Left cardiac atrium (tissue), 4 donors: ENCODE measurements at regions of chr12 and their contacts with region 1.

Region 1: DNA sequence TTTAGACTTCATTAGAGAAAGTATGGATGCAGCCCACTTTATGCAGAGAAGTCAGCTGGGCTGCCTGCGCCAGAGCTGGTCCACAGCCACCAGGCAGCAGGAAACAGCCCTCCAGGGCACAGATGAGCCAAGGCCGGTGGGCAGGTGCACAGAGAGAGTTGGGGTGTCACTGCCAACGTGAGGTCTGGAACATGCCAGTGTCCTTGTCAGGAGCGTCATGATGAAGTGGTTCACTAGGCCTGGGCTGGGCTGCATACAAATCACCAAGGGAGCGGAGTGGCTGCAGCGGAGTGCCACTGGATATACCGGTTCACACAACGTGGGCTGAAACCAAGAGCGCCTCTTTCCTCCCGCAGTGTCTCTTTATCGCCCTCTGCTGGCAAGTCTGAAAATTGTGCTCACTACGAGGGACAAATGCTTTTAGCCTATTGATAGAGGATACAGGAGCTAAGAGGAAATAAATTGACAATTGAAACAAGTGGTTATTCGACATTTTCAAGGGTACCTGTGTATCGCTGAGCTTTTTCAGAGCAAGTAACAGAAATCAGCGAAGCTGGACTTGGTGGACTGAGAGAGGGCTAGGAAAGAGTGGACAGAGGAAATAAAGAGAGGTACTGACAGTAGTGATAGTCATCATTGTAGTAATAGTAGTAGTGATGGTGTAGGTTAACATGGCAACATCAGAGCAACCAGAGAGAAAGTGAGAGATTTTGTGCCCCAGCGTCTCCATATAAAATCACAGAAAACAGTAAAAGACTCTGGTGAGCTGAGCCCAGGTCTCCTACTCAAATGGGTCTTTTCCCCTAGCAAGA is 52.0 kb upstream of the ITPR2 start:
- DNase-seq: peak; percentile 82
- ATAC-seq: peak; percentile 90 to 93

Region 2: DNA sequence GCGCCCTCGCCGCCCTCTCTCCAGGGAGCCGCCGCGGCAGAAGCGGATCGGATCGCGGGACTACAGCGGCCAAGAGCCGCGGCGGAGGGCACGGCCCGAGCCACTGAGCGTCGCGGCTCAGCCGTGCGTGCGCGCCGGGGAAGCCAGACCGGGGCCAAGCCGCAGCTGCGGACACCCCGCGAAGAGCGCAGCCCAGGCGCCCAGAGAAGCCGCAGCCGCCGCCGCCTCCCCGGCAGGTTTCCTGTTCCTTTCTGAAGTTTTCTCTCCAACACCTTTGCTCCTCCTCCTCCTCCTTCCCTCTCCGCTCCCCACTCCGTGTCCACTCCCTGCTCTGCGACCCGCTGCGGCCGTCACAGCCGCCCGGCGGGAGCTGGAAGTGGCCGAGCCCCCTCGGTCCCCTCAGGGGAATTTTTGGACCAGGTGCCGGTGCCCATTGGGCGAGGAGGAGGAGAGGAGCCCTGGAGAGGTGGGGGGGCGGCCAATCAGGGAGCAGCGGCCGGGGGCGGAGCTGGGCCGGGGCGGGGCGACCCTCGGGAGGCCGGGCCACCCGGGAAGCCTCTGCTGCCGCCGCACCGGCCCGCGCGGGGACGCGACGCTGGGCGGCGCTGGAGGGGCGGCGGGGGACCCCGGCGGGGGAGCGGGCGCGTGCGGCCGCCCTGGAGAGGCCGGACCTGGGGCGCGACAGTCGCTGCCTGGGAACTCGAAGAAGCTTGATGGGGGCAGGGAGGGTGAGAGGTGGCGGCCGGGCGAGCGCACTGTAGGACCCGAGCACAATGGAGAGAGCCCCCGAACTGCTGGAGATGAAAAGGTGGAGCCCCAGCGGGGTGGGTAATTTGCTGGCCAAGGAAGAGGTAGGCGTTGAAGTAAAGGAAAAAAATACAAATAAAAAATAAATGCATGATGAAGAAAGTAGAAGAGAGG is 51.9 kb before region 1 on chr12 and contains the start of gene ITPR2:
- intact Hi-C with region 1: loop called in 1 of 2 experiments (anchors 10 kb)
- DNase-seq: peak; percentile 96
- ATAC-seq: peak; percentile 97
- total RNA-seq, gene ITPR2: 25.4 to 26.7 TPM

Region 3: GRCh38 chr12:26853303-26854030 is 31.5 kb before region 1 on chr12:
- intact Hi-C with region 1: loop called in 1 of 2 experiments (anchors 2 kb)
- DNase-seq: peak; percentile 65
- ATAC-seq: peak; percentile 83 to 88

Region 4: DNA sequence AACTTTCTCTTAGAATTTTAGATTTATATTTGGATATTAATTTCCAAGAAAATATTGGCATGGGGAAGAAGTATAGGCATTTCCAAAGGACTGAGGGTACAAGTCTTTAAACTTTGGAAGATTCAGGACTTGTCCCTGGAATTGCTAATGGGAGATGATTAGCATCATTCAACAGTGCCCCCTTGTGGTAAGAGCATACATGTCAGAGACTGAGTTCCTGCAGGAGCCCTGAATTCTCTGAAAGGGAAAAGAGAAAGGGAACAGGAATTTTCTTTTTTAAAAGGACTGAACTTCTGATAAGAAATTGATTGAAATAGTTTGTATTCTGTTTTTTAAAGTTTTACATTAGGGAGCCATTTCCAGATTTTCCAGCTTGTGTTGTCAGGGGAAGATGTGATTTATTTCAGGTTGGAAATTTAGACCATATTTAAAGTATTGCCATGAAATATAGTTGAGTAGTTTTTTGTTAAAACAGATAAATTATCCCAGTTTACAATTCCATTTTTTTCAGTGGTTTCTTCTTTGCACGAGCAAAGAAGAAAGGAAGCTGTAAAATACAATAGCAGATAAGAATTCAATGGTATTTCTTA is 767.3 kb after region 1 on chr12:
- intact Hi-C with region 1: no loop called
- DNase-seq: peak; percentile 24
- ATAC-seq: peak; percentile 67 to 77